ENCODE measurements at regions of chr6 and their contacts with region 1.

Region 1: DNA sequence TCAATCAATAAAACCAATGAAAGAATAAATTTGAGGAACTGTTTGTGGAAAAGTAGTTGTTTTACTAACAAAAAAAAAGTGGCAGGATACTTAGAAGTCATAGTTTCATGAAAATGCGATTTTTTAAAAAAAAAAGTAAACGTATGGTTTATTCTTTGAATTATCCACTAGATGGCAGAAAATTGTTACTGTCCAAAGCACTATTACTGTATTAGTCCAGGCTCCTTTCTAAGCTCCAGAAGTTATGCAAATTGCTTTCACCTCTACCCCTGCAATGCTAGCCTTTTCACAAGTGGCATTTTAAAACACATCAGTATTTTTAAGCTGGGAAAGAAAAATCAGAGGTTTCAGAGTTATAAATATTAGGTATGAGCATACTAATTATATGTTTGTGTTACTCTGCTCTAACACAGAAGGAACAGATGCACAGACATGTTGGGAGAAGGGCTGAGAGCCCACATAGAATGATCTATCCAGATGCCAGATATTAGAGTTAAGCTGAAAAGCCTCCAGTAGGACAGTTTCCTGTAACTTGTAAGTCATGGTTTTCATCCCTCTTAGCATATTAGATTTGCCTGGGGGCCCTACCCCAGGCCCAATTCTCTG is 63.9 kb downstream of the FHL5 start:
- DNase-seq: peak in 4 of 5 donors; percentile 7 to 24 (median 17)
- H3K4me3 ChIP-seq: no peak overlapping the region
- H3K4me3 Mint-ChIP-seq: no peak overlapping the region
- H3K27ac ChIP-seq: no peak overlapping the region
- H3K27ac Mint-ChIP-seq: no peak overlapping the region
- H3K4me1 ChIP-seq: no peaks in the 10 kb centered on the region
- H3K4me1 Mint-ChIP-seq: no peaks in the 10 kb centered on the region
- H3K27me3 ChIP-seq: no peaks in the 10 kb centered on the region
- H3K27me3 Mint-ChIP-seq: peaks cover 3 to 6% of the 10 kb centered on the region in 2 donors

Region 2: GRCh38 chr6:96610019-96610418 is 16.8 kb before region 1 on chr6:
- CTCF ChIA-PET with region 1: no interaction called
- POLR2A ChIA-PET with region 1: no interaction called
- intact Hi-C with region 1: no loop called
- DNase-seq: no peak
- H3K4me3 ChIP-seq: no peak overlapping the region
- H3K4me3 Mint-ChIP-seq: no peak overlapping the region
- H3K27ac ChIP-seq: no peak overlapping the region
- H3K27ac Mint-ChIP-seq: no peak overlapping the region
- H3K4me1 ChIP-seq: no peaks in the 10 kb centered on the region
- H3K4me1 Mint-ChIP-seq: no peaks in the 10 kb centered on the region
- H3K27me3 ChIP-seq: no peaks in the 10 kb centered on the region
- H3K27me3 Mint-ChIP-seq: peaks cover 1 to 3% of the 10 kb centered on the region in 2 donors

Region 3: GRCh38 chr6:96653181-96653580 is 26.3 kb after region 1 on chr6:
- CTCF ChIA-PET with region 1: no interaction called
- POLR2A ChIA-PET with region 1: no interaction called
- intact Hi-C with region 1: no loop called
- DNase-seq: no peak
- H3K4me3 ChIP-seq: no peak overlapping the region
- H3K4me3 Mint-ChIP-seq: no peak overlapping the region
- H3K27ac ChIP-seq: no peak overlapping the region
- H3K27ac Mint-ChIP-seq: no peak overlapping the region
- H3K4me1 ChIP-seq: no peaks in the 10 kb centered on the region
- H3K4me1 Mint-ChIP-seq: peaks cover 0 to 4% (median 2%) of the 10 kb centered on the region in 4 donors
- H3K27me3 ChIP-seq: no peaks in the 10 kb centered on the region
- H3K27me3 Mint-ChIP-seq: peaks cover 6 to 18% of the 10 kb centered on the region in 2 donors

Region 4: DNA sequence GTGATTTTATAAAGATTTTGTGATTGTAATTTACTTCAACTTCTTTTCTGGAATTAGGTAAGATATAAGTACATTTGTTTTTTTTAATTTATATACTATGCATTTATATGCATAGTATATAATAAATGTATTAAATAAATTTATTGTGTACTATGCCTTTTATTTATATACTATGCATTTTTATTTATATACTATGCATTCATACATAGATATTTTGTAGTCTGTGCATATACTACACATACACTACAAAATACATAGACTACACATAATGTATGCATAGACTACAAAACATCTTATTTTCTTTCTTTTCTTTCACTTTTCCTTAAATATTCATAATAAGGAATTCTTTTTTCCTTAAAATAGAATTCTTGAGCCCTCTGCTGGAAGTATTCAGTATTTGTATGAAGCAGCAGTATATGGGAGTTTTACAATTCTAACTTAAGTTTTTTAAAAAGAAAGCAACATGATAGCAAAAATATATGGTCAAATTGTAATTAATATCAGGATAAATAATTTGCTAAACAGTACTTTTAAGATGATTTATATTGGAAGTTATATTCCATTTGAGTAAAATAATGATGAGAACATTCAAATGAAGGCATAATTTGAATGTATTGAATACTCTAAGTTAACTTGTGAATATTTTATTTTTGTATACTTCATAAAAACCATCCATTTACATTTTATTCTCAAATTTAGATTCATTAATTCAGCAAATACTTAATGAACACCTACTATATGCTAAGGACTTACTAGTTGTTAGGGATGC is 427.0 kb after region 1 on chr6:
- CTCF ChIA-PET with region 1: interaction called, 43 read pairs
- POLR2A ChIA-PET with region 1: no interaction called
- intact Hi-C with region 1: loop called (anchors 1 kb)
- DNase-seq: no peak
- H3K4me3 ChIP-seq: no peak overlapping the region
- H3K4me3 Mint-ChIP-seq: no peak overlapping the region
- H3K27ac ChIP-seq: no peak overlapping the region
- H3K27ac Mint-ChIP-seq: no peak overlapping the region
- H3K4me1 ChIP-seq: no peaks in the 10 kb centered on the region
- H3K4me1 Mint-ChIP-seq: peaks cover 0 to 8% (median 7%) of the 10 kb centered on the region in 4 donors
- H3K27me3 ChIP-seq: no peaks in the 10 kb centered on the region
- H3K27me3 Mint-ChIP-seq: no peaks in the 10 kb centered on the region

Measured in CD4-positive, alpha-beta memory T cell (primary cell).